Heart right ventricle (tissue), 16 donors: ENCODE measurements at regions of chr11 and their contacts with region 1.

Region 1: GRCh38 chr11:65083834-65084597 is at the starts of genes CDCA5 and ZFPL1:
- DNase-seq: peak; percentile 95
- ATAC-seq: peak; percentile 94 to 98 (median 98)
- H3K4me3 ChIP-seq: peak within 1 kb of the TSS; percentile 64 to 93 (median 81)
- H3K27ac ChIP-seq: peak within 1 kb of the TSS; percentile 79 to 96 (median 92)
- H3K4me1 ChIP-seq: peaks cover 6 to 34% (median 20%) of the 10 kb centered on the region in 9 donors
- H3K27me3 ChIP-seq: no peaks in the 10 kb centered on the region
- CTCF ChIP-seq: no peak
- total RNA-seq, gene CDCA5: 0.50 to 5.3 (median 1.0) TPM
- total RNA-seq, gene ZFPL1: 21.5 to 27.7 (median 24.8) TPM

Region 2: GRCh38 chr11:64924102-64924851 is 159.7 kb before region 1 on chr11 and contains the start of gene PPP2R5B:
- intact Hi-C with region 1: loop called in 1 of 10 experiments (anchors 10 kb)
- DNase-seq: peak; percentile 92 to 94
- ATAC-seq: peak; percentile 95 to 98 (median 98)
- H3K4me3 ChIP-seq: peak within 1 kb of the TSS; percentile 84 to 100 (median 98)
- H3K27ac ChIP-seq: peak within 1 kb of the TSS; percentile 89 to 99 (median 96)
- H3K4me1 ChIP-seq: peaks cover 10 to 43% (median 27%) of the 10 kb centered on the region in 9 donors
- H3K27me3 ChIP-seq: no peaks in the 10 kb centered on the region
- CTCF ChIP-seq: no peak
- total RNA-seq, gene PPP2R5B: 13.4 to 29.8 (median 20.4) TPM

Region 3: DNA sequence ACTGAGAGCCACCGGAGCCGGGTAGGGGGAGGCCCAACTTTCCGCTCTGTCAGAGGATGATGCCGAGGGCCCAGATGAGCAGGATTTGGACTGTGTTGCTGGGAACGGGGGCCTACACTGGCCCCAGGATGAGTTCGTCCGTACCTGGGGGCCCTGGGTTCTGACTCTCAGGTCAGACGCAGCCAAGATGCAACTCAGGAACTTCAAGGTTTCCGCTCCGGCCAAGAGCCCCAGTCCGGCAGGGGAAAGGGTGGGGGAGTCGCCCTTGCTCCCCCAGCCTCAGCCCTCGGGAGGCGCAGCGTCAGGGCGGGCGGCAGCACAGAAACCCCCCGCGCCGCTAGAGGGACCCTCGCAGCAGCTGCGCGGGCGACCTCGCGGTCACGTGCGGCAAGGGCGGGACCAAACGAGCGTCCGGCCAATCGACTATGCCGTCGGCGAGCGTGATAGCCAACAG is 70.3 kb before region 1 on chr11:
- intact Hi-C with region 1: loop called in 1 of 10 experiments (anchors 10 kb)
- DNase-seq: peak; percentile 94
- ATAC-seq: peak; percentile 93 to 96 (median 96)
- H3K4me3 ChIP-seq: peak overlapping the region; percentile 57 to 92 (median 76)
- H3K27ac ChIP-seq: peak overlapping the region; percentile 87 to 100 (median 98)
- H3K4me1 ChIP-seq: peaks cover 11 to 34% (median 20%) of the 10 kb centered on the region in 9 donors
- H3K27me3 ChIP-seq: no peaks in the 10 kb centered on the region
- CTCF ChIP-seq: peak in 2 of 9 donors; percentile 61 to 63

Region 4: DNA sequence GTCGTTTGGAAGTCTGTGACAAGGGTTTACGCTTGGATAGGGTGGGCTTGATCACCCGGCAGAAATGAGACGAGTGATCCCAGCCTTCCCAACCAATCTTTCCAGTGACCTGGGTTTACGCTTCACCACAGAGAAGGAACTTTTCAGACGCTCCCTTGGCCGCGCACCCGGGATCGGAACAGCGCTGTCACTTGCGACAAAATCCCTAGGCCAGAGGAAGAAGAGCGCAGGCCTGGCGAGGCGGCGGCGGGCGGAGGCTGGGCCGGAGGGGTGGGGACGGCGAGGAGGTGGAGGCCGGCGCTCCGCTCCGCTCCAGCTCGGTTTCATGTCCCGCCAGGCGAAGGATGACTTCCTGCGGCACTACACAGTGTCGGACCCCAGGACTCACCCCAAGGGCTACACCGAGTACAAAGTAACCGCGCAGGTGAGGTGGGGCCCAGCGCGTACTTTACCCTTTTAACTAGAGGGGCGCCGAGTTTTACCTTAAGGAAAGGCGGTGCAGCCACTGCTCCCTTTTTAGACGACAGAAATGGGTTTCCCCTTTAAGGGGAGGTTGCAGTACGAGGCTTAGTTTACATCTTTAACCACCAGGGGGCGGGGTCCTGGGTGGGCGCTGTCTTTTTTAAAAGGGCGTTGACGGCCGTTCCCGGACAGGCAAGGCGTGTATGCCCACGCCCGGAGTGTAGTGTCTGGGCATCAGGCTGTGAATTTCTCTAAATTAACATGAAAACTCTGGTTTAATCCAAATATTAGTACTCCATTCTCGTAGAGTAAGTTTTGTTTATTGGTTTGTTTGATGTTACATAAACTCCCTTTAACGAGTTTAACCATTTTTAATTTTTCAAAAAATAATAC is 56.6 kb before region 1 on chr11 and contains the start of gene SNX15:
- intact Hi-C with region 1: loop called in 3 of 10 experiments (anchors 2 to 5 kb)
- DNase-seq: peak; percentile 93 to 96
- ATAC-seq: peak; percentile 98 to 99 (median 99)
- H3K4me3 ChIP-seq: peak within 1 kb of the TSS; percentile 2 to 68 (median 64)
- H3K27ac ChIP-seq: peak within 1 kb of the TSS; percentile 82 to 92 (median 88)
- H3K4me1 ChIP-seq: peaks cover 0 to 22% (median 17%) of the 10 kb centered on the region in 9 donors
- H3K27me3 ChIP-seq: no peaks in the 10 kb centered on the region
- CTCF ChIP-seq: peak; percentile 75 to 92 (median 88)
- total RNA-seq, gene SNX15: 11.4 to 21.8 (median 15.2) TPM

Region 5: DNA sequence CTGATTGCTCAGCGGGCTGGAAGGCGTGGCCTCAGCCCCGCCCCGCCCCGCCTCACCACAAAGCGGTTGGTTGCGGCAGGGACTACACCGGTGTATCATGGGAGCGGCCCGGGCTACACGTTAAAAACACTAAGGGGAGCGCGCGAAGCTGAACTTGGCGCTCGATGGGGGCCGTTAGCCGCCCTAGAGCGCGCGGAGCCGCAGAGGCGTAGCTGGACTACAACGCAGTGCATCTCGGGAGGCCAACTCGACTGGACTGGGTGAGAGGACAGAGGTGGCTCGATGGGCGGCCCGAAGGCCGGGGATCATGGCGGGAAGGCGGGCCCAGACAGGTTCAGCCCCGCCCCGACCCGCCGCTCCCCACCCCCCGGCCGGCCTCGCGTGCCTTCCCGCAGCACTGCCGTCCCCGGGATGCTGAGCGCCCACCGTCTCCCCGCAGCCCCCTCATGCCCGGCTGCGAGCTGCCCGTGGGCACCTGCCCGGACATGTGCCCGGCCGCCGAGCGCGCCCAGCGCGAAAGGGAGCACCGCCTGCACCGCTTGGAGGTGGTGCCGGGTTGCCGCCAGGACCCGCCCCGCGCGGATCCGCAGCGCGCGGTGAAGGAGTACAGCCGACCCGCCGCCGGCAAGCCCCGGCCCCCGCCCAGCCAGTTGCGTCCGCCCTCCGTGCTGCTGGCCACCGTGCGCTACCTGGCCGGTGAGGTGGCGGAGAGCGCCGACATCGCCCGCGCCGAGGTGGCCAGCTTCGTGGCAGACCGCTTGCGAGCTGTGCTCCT is 43.0 kb before region 1 on chr11 and contains the start of gene SAC3D1:
- intact Hi-C with region 1: loop called in 4 of 10 experiments (anchors 1 to 5 kb)
- DNase-seq: peak; percentile 89
- ATAC-seq: peak; percentile 96 to 98 (median 97)
- H3K4me3 ChIP-seq: peak within 1 kb of the TSS; percentile 42 to 92 (median 80)
- H3K27ac ChIP-seq: peak within 1 kb of the TSS; percentile 81 to 97 (median 93)
- H3K4me1 ChIP-seq: peaks cover 0 to 40% (median 18%) of the 10 kb centered on the region in 9 donors
- H3K27me3 ChIP-seq: no peaks in the 10 kb centered on the region
- CTCF ChIP-seq: peak in 2 of 9 donors; percentile 9 to 16
- total RNA-seq, gene SAC3D1: 3.8 to 9.3 (median 4.8) TPM

Region 6: DNA sequence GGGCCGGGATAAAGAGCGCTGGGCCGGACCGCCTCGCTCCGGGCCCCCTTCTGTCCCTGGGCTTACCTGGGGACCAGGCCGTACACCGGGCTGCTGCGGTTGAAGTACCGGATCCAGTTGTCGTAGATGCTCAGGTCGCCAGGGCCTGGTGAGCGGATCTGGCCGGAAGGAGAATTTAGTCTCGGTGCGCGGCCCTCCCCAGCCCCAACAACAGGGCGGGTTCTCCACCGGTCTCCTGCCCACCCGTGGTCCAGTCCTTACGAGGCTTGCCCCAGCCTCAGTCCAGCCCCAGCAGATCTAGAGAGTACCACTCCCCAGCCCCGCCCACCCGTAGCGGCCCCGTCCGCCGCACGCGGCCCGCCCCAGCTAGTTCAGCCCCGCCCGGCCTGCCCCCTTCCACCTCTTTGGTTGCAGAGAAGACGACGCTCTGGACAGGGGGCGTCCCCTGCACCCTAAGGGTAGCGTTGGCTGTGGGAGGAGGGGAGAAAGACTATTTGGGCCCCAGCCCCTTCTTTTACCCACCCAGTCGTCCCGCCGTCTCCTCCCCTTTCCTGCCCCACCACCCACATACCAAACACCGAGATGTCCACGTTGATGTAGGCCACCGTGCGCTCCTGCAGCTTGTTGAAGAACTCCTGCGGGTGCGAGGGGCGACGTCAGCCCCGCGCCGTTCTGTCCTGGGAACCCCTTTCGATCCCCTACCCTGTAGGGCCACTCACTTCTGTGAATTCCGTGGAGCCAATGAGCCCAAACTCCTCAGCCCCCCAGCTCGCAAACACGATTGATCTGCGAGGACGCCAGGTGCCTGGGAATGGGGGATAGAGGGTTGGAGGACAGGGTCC is 36.2 kb before region 1 on chr11:
- intact Hi-C with region 1: loop called in 2 of 10 experiments (anchors 5 kb)
- DNase-seq: peak in 1 of 2 donors; percentile 60
- ATAC-seq: peak; percentile 21 to 71 (median 52)
- H3K4me3 ChIP-seq: peak overlapping the region; percentile 47 to 76 (median 62)
- H3K27ac ChIP-seq: peak overlapping the region in 9 of 10 donors; percentile 2 to 75 (median 57)
- H3K4me1 ChIP-seq: peaks cover 0 to 39% (median 17%) of the 10 kb centered on the region in 9 donors
- H3K27me3 ChIP-seq: no peaks in the 10 kb centered on the region
- CTCF ChIP-seq: no peak

Region 7: GRCh38 chr11:65095974-65096806 is 12.2 kb after region 1 on chr11 and contains the start of gene VPS51:
- intact Hi-C with region 1: loop called in 2 of 10 experiments (anchors 1 kb)
- DNase-seq: peak; percentile 83 to 90
- ATAC-seq: peak; percentile 94 to 96 (median 95)
- H3K4me3 ChIP-seq: peak within 1 kb of the TSS; percentile 75 to 94 (median 86)
- H3K27ac ChIP-seq: peak within 1 kb of the TSS; percentile 67 to 96 (median 93)
- H3K4me1 ChIP-seq: peaks cover 4 to 31% (median 18%) of the 10 kb centered on the region in 9 donors
- H3K27me3 ChIP-seq: no peaks in the 10 kb centered on the region
- CTCF ChIP-seq: no peak
- total RNA-seq, gene VPS51: 79.2 to 123 (median 100) TPM

Region 8: DNA sequence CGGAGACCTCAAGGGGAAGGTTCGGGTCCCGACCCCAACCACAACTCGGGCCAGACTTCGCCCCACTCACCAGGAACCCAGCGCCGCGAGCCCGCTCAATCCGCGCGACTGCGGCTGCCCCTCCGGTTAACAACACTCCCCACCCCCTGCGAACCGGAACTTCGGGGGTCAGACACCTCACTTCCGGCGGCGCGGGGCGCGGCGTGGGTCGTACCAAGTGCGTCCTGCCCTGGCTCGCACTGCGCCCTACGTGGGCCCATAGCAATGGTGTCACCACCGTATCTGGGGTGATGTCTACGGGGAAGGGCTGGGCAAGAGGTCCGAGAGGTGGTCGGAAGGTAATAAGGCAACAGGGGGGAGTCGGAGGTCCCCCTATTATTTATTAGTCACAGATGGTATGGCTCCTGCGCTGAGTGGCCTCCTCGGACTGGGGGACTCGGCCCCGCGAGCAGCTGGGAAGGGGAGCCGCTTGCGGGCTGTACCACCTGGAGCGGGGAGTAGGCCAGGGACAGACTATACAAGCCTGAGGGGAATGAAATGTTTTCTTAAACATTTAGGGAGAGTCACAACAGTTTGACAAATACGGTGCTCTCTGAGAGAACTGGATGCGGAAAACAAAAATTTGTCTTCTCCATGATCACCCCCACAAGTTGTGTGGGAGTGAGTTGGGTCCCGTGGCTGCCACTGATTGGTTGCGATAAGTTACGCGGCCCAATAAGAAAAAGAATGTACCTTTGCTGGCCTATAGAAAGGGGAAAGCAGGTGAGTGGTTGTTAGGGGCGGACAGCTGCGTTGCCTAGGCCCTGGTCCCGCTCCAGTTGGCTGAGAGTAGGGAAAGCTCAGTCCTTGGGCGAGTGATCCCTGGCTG is 50.6 kb after region 1 on chr11 and contains the start of gene SYVN1:
- intact Hi-C with region 1: no loop called
- DNase-seq: peak; percentile 91 to 93
- ATAC-seq: peak; percentile 90 to 96 (median 94)
- H3K4me3 ChIP-seq: peak within 1 kb of the TSS; percentile 75 to 98 (median 88)
- H3K27ac ChIP-seq: peak within 1 kb of the TSS; percentile 95 to 100 (median 98)
- H3K4me1 ChIP-seq: peaks cover 12 to 36% (median 27%) of the 10 kb centered on the region in 9 donors
- H3K27me3 ChIP-seq: no peaks in the 10 kb centered on the region
- CTCF ChIP-seq: no peak
- total RNA-seq, gene SYVN1: 24.1 to 34.0 (median 27.8) TPM